Left ventricle myocardium inferior (tissue), 1 donor: ENCODE measurements at regions of chr11 and their contacts with region 1.

Region 1: GRCh38 chr11:128630367-128631230 is 43.2 kb upstream of the ETS1 start:
- DNase-seq: peak; percentile 87
- H3K4me3 ChIP-seq: no peak overlapping the region
- H3K27ac ChIP-seq: peak overlapping the region; percentile 47
- H3K4me1 ChIP-seq: peaks cover 19% of the 10 kb centered on the region
- H3K27me3 ChIP-seq: no peaks in the 10 kb centered on the region
- CTCF ChIP-seq: peak; percentile 89

Region 2: DNA sequence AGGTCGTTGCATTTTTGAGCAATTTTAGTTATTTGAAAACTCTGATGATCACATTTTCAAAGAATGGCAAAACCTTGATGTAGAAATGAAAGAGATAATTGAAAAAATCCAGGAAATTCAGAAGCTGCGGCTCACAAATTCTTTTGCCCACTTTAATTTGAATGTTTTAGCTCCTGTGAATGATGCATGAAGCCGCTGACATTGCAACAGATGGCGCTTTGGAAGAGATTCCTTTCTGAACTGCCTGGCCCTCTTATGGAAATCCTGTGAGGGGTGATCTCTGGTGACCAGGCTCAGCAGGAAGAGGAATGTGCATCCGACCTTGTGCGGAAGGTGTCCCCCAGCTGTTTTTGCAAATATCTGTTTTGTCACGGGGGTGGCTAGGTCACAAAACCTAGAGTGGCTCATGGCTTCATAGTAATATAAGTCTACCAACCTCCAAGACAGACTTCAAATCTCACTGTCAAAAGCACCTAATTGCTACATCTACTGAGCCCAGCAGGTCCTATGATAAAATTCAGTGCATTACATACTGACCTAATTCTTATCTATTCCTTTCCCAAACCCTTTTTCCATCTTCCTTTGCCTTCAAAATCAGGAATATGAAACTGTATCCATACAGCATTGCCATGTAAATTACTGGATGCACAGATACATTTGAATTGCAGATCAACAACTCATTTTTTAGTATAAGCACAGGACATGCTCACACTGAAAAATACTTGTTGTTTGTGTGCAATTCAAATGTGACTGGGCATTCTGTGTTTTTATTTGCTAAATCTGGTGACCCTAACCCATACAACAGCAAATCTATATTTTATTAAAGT is 455.9 kb before region 1 on chr11:
- intact Hi-C with region 1: loop called (anchors 5 kb)
- DNase-seq: no peak
- H3K4me3 ChIP-seq: no peak overlapping the region
- H3K27ac ChIP-seq: no peak overlapping the region
- H3K4me1 ChIP-seq: no peaks in the 10 kb centered on the region
- H3K27me3 ChIP-seq: no peaks in the 10 kb centered on the region
- CTCF ChIP-seq: no peak

Region 3: DNA sequence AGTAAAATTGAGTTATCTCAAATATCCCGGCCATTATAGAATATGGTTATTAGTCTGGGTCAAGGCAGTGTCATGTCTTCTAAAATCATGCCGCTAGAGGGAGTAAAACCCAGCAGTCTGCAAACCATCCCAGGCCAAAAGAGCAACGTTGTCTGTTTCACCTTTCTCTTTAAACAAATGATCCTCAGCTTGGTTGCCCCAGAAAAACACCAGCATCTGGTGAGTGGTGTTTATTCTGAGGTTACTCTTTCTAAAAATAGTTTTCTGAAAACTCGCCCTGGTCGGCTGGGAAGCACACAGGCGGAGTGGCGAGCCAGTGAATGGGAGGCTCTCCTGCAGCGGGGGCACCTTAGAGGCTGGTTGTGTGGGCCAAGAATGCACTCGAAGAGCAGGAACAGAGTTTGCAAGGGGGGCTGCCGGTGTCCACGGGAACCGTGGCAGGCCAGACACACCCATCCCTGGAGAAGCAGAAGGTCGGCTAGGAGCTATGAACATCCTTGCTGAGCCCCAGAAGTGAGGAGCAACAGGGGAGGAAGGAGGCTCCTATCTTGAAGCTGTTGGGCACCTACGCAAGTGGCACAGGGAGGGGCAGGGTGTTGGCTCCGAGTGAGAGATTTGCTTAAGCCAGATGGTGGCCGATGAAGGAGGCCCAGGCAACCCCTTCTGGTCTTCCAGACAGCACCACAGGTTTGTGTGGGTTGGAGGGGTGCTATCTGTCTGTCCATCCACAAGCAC is 340.3 kb before region 1 on chr11:
- intact Hi-C with region 1: loop called (anchors 5 kb)
- DNase-seq: peak; percentile 18
- H3K4me3 ChIP-seq: peak overlapping the region; percentile 47
- H3K27ac ChIP-seq: peak overlapping the region; percentile 69
- H3K4me1 ChIP-seq: peaks cover 41% of the 10 kb centered on the region
- H3K27me3 ChIP-seq: no peaks in the 10 kb centered on the region
- CTCF ChIP-seq: peak; percentile 91

Region 4: GRCh38 chr11:128568166-128568778 is 62.3 kb before region 1 on chr11:
- intact Hi-C with region 1: no loop called
- DNase-seq: peak; percentile 28
- H3K4me3 ChIP-seq: peak overlapping the region; percentile 15
- H3K27ac ChIP-seq: peak overlapping the region; percentile 77
- H3K4me1 ChIP-seq: peaks cover 59% of the 10 kb centered on the region
- H3K27me3 ChIP-seq: no peaks in the 10 kb centered on the region
- CTCF ChIP-seq: no peak

Region 5: DNA sequence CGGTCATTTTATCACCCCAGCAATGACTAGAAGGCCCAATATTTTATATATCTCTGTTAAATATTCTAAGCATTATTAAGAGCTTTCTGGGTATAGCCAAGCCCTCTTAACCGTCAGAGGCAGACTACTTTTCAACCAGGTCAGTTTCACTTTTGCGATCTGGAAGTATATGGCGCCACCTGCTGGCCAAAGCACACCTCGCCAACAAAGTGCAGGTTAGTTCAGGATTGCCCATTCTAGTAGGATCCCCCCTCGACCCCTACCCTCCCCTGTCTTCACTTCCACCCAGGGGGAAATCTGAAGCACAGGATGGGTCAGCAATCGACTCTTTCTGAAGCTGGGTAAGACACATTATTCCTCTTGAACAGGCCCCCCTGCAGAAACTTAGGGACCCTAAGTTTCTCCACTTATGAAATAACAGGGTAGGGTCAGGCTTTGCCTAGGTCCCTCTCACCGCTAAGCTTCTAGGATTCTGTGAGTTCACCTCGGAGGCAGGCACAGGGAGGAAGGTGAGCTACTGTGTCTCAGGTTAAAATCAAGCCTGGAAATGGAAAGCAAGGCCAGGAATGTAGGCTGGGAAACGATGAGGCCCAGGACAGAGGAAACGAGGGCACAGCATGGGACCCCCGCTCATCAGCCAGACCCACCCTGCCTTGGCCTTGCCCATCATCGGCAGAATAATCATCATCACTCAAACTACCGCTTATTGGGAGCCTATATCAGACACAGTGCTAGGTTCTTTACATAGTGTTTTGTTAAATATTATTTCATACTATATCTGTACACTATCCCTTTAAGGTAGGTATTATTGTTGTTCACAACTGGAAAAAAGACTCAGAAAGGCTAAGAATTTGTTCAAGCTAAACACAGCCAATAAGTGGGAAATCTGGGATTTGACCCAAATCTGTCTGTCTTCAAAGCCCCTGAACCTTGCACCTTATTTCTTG is 200.8 kb after region 1 on chr11:
- intact Hi-C with region 1: loop called (anchors 5 kb)
- DNase-seq: peak; percentile 78
- H3K4me3 ChIP-seq: peak overlapping the region; percentile 33
- H3K27ac ChIP-seq: no peak overlapping the region
- H3K4me1 ChIP-seq: peaks cover 36% of the 10 kb centered on the region
- H3K27me3 ChIP-seq: no peaks in the 10 kb centered on the region
- CTCF ChIP-seq: peak; percentile 90